Right cardiac atrium (tissue), 5 donors: ENCODE measurements at regions of chr1 and their contacts with region 1.

Region 1: GRCh38 chr1:23959041-23959460 is 577 bp upstream of the PNRC2 start:
- DNase-seq: peak; percentile 85 to 92 (median 90)
- ATAC-seq: peak; percentile 84 to 87
- H3K4me3 ChIP-seq: peak overlapping the region; percentile 75
- H3K27ac ChIP-seq: peak overlapping the region; percentile 78
- H3K4me1 ChIP-seq: peaks cover 2% of the 10 kb centered on the region
- H3K27me3 ChIP-seq: no peaks in the 10 kb centered on the region

Region 2: GRCh38 chr1:24027838-24028468 is 68.9 kb after region 1 on chr1:
- intact Hi-C with region 1: loop called in 2 of 4 experiments (anchors 5 to 10 kb)
- DNase-seq: no peak
- ATAC-seq: peak; percentile 65 to 75
- H3K4me3 ChIP-seq: no peak overlapping the region
- H3K27ac ChIP-seq: no peak overlapping the region
- H3K4me1 ChIP-seq: no peaks in the 10 kb centered on the region
- H3K27me3 ChIP-seq: no peaks in the 10 kb centered on the region